H1 (cell line): ENCODE measurements at regions of chr15 and their contacts with region 1.

Region 1: DNA sequence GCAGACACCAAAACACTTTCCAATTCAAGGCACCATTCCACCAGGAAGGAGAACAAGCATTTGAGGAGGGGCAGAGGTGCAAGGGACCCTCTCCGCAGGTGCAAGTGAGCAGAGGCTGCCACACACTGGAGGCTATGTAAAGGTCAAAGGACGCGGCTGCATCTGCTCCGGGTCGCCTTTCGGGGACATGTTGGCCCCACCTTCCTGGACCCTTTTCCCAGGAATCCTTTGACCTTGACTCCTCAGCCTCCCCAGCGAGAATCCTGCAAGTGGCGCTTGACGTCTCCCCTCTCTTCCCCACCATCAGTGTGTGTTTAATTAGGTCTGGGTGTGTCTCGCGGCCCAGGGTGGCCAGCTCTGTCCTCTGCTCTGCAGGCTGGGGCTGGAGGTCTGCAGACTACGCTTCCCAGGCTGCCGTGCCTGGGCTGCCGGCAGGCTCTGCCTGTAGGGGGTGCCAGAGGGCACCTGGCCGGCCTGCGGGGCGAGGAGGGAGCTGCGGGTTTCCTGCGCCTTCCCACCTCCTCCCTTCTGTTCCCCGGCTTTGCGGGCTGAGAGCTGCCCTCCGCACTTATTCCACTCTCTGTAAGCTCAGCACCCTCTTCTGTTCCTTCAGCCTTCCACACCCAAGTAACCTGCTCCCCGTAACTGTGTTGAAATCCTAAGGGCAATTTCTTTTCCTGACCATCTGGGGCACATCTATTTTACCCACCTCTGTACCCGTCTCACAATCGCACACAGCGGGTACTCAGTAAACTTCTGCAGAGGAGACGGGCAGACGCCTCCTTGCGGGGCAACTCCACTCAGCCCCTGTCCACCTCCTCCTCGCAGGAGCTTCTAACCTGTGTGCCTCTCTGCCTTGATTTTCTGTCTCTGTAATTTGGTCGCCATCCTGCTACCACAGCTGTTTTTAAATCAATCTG is 129.8 kb downstream of the NSMCE3 start:
- DNase-seq: peak; percentile 54 to 94
- H3K4me3 ChIP-seq: peak overlapping the region; percentile 40 to 58 (median 46); a peak in 6 of 8 replicates
- H3K27ac ChIP-seq: no peak overlapping the region
- H3K4me1 ChIP-seq: peaks cover 0 to 12% (median 8%) of the 10 kb centered on the region in 4 experiments; a peak in 6 of 7 replicates
- H3K27me3 ChIP-seq: no peaks in the 10 kb centered on the region
- CTCF ChIP-seq: peak; percentile 93 to 99 (median 96)
- EP300 ChIP-seq: no peak
- POLR2A ChIP-seq: no peak
- RAD21 ChIP-seq: peak; percentile 78 to 89

Region 2: DNA sequence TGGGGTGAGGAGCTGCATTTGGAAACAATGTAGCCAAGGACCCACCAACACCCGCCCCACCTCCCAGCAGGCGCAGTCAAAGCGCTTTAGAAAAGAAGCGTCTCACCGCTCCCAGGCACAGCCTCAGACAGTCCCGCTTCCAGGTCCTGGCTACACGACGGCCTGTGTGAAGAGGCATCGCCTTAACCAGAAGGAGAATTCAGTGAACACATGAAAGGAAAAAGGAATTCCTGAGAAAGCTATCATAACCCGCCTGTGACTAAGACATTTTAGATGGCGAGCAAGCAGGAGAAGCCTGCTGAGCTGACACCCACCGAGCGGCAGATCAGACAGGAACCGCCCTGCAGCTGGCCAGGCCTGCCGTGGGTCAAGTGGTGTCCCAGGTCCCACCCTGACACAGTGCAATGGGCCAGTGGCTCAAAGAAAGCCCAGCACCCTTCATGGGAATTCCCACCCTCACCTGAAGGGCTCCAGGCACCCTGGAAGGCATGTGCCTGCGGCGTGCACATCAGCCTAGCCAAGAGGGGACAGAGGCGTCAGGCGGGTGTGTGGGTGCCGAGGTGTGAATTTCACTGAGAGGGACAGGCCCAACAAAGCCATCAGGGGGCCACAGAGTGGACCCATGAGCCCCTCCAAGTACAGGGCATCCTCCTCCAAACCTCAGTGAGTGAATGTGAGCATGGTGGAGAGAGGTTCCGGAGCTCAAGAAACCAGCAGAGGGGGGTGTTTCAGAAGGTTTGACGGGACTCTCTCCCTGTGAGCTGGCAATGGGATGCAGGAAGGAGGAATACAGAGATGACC is 15.0 kb before region 1 on chr15:
- CTCF ChIA-PET with region 1: interaction called, 88 read pairs
- POLR2A ChIA-PET with region 1: interaction called, 3 read pairs
- DNase-seq: no peak
- H3K4me3 ChIP-seq: no peak overlapping the region
- H3K27ac ChIP-seq: no peak overlapping the region
- H3K4me1 ChIP-seq: peaks cover 0 to 2% (median 0%) of the 10 kb centered on the region in 4 experiments; a peak in 4 of 7 replicates
- H3K27me3 ChIP-seq: no peaks in the 10 kb centered on the region
- CTCF ChIP-seq: peak in 2 of 3 experiments; percentile 26 to 37; a peak in 2 of 4 replicates
- EP300 ChIP-seq: no peak
- POLR2A ChIP-seq: no peak
- RAD21 ChIP-seq: peak; percentile 18 to 61; a peak in 3 of 4 replicates

Region 3: DNA sequence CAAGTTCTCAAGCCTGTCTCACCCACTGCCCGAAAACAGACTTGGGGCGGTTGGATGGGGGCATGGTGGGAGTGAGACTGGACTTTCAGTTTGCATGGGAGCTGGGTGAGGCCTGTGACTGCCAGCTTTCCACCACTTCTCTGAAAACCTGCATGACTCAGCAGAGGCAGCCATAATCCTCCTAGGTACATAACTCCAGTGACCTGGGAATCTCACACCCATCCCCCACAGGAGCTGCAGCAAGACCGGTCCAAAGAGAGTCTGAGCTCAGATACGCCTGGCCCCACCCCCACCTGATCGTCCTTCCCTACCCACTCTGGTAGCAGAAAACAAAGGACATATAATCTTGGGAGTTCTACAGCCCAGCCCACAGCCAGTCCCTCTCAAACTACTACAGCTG is 22.6 kb after region 1 on chr15:
- CTCF ChIA-PET with region 1: interaction called, 10 read pairs
- POLR2A ChIA-PET with region 1: no interaction called
- DNase-seq: no peak
- H3K4me3 ChIP-seq: no peak overlapping the region
- H3K27ac ChIP-seq: no peak overlapping the region
- H3K4me1 ChIP-seq: no peaks in the 10 kb centered on the region
- H3K27me3 ChIP-seq: no peaks in the 10 kb centered on the region
- CTCF ChIP-seq: no peak
- EP300 ChIP-seq: no peak
- POLR2A ChIP-seq: no peak
- RAD21 ChIP-seq: no peak